ENCODE measurements at regions of chr22 and their contacts with region 1.

Region 1: DNA sequence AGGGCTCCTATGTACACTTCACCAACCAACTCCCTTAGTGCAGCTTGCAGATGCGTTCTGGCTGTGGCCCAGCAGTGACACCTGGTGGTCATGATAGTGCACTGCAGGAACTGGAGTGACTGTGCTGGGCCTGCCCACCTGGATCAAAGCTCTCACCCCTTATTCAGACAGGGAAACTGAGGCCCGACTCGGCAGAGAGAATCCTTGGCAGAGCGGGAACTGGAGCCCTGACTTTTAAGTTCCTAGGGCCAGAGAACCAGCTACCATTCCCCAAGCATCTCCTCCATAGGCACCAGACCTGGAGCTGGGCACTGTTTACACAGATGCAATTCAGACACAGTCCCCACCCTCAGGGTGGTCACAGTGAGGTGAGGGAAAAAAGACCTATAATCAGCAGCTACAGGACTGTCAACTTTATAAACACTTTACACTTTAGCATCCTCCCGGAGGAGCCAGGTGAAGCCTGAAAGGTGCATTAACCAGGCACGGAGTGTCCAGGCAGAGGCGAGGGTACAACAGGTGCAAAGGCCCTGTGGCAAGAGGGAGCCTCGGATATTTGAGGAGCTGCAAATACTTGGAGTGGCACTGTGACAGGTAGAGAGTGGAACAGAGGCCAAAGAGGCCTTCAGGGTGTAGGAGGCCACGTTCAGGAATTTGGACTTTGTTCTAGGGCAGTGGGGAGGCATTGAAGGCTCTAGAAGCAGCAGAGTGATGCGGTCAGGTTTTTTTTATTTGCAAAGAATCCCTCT is 22.0 kb downstream of the RHBDD3 start:
- DNase-seq: peak; percentile 54
- H3K4me3 Mint-ChIP-seq: no peak overlapping the region
- H3K27ac Mint-ChIP-seq: no peak overlapping the region
- H3K4me1 Mint-ChIP-seq: no peaks in the 10 kb centered on the region
- H3K27me3 Mint-ChIP-seq: peaks cover 36% of the 10 kb centered on the region

Region 2: DNA sequence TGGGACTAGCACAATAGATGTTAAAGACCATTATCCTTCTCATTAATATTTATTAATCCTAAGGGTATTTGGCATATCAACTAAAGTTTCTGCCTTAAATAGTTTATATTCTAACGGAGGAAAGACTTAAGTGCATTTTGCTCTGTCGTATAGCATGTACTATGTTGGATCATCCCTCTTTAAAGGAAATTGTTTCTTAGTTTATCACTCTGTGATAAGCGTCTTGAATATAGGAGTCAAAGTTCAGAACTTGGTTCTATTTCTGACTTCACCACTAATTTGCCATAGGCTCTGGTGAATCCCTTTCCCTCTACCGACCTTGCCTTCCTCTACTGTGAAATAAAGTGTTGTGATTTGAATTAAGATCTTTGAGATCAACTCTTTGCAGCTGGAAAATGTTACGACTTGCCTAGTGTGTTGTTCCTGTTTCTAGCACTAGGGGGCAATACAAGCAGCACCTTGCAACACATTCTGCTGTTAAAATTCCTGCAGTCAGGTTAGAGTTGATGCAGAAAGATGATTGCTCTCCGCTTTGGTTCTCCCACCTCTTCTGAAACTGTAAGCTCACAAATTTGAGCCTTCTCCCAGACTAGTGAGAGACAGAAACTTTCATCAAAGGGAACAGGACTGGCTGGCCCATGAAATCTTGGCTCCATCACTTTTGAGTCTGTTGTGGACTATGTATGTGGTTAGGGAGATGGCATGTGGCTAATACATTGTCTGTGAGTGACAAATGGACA is 390.3 kb before region 1 on chr22:
- intact Hi-C with region 1: loop called (anchors 2 kb)
- DNase-seq: peak; percentile 23
- H3K4me3 Mint-ChIP-seq: no peak overlapping the region
- H3K27ac Mint-ChIP-seq: no peak overlapping the region
- H3K4me1 Mint-ChIP-seq: no peaks in the 10 kb centered on the region
- H3K27me3 Mint-ChIP-seq: peaks cover 8% of the 10 kb centered on the region

Region 3: DNA sequence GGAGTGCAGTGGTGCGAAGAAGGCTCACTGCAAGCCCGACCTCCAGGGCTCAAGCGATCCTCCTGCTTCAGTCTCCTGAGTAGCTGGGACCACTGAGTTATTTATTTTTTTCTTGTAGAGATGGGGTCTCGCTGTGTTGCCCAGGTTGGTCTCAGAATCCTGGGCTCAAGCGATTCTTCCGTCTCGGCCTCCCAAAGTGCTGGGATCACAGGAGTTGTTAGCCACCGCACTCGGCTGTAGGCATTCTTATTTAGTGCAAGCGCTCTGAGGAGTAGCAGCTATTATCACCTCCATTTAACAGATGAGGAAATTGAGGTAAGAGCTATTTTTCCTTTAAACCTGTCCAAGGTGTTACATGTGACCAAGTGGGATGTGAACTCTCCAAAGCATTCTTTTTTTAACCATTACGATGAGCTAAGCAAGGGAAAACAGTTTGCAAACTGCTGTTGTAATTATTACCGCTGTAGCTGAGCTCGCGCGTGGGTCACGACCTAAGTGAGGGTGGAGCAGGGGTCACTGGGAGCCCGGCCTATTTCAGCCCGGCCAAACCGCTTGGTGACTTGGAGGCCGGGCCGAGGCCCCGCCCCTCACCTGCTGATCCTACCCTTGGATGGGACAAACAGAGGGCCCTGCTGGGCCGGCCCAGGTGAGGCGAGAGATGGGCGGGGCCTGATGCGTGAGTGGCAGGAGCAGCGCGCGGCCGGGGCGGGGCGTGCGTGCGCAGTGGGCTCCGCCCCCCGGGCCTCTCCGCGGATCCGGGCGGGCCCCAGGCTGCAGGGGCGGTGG is 173.4 kb before region 1 on chr22:
- intact Hi-C with region 1: loop called (anchors 10 kb)
- DNase-seq: peak; percentile 78
- H3K4me3 Mint-ChIP-seq: peak overlapping the region; percentile 58
- H3K27ac Mint-ChIP-seq: no peak overlapping the region
- H3K4me1 Mint-ChIP-seq: peaks cover 14% of the 10 kb centered on the region
- H3K27me3 Mint-ChIP-seq: peaks cover 62% of the 10 kb centered on the region

Region 4: GRCh38 chr22:29154364-29155048 is 91.3 kb before region 1 on chr22:
- intact Hi-C with region 1: loop called (anchors 5 kb)
- DNase-seq: peak; percentile 67
- H3K4me3 Mint-ChIP-seq: no peak overlapping the region
- H3K27ac Mint-ChIP-seq: no peak overlapping the region
- H3K4me1 Mint-ChIP-seq: peaks cover 10% of the 10 kb centered on the region
- H3K27me3 Mint-ChIP-seq: peaks cover 13% of the 10 kb centered on the region

Region 5: DNA sequence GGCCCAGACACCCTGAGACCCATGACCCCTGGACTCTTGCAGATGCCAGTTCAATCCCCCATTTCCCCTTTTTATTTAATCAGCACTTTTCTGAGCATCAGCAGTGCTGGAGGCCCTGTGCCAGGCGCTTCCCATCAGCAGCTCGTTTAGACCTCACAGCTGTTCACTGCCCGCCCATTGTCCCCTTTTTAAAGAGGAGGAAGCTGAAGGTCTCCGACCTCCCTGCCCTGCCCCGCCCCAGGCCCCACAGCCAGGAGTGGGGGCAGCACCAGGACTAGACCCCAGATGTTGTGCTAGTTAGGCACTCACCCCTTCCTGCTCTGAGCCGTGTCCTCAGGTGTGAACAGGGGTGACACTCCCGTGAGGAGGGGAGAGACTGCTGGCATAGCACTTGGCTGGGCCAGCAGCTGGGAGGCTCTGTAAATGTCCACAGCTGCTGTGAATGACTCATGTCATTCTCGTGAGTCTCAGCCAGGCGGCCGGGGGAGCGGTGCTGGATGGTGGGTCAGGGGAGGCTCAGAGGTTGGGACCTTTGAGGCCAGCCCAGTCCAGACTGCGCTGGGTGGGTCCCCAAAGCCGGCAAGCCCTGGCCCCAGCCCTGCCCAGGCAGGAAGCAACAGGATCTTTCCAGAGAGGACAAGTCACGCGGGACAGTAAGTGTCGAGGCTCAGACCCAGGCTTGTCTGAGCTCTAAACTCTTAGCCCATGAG is 20.2 kb before region 1 on chr22:
- intact Hi-C with region 1: no loop called
- DNase-seq: no peak
- H3K4me3 Mint-ChIP-seq: no peak overlapping the region
- H3K27ac Mint-ChIP-seq: no peak overlapping the region
- H3K4me1 Mint-ChIP-seq: no peaks in the 10 kb centered on the region
- H3K27me3 Mint-ChIP-seq: no peaks in the 10 kb centered on the region

Measured in activated T-helper 2 cell treated with anti-CD3 and anti-CD28 coated beads, Interferon-gamma antibody, Interleukin-2, Interleukin-4, amounts not matched to agents 10 μg/mL and 5 μg/mL and 100 μg/mL, durations not matched to agents 14 hours and 24 hours and 36 hours (primary cell).